MCF 10A (cell line): ENCODE measurements at regions of chr12 and their contacts with region 1.

Region 1: DNA sequence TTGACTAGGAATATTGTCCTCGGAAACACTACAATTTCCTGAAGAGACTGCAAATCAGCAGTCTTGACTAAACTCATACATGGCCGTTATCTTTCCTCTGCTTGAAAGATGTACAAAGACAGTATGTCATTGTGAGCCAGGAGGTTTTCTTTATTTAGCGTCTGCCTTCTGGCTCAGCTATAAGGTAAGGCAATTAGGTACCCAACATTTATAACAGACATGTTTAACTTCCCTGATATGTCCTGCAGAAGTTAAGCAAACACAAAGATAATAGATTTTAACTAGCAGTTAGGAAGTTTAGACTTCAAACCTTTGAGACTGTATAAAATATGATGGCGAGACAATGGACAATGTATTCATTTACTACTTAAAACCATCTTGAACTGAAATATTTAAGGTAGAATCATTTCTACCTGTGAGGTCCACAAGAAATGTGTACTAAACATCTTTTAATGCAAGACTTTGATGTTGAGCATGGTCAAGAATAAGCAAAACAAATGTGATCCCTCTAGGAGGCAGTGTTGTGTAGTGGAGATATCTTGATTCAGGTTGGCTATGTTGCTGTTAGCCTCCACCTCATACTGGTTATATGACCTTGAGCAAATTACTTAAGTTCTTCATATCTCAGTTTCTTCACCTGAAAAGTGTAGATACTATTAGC is 96.2 kb upstream of the EEA1 start:
- DNase-seq: peak; percentile 70
- H3K4me3 Mint-ChIP-seq: no peak overlapping the region
- H3K27ac Mint-ChIP-seq: no peak overlapping the region
- H3K4me1 Mint-ChIP-seq: no peaks in the 10 kb centered on the region
- H3K27me3 Mint-ChIP-seq: no peaks in the 10 kb centered on the region
- CTCF ChIP-seq: peak; percentile 51

Region 2: DNA sequence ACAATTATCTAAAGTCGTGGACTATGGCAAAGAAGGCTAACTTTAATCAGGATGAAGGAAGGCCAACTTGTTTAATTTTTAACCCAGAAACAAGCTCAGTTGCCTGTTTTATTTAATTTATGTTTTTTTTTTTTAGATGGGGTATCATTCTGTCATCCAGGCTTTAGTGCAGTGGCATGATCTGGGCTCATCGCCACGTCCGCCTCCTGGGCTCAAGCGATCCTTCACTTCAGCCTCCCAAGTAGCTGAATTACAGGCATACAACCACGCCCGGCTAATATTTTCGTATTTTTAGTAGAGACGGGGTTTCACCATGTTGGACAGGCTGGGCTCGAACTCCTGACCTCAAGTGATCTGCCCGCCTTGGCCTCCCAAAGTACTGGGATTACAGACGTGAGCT is 372.1 kb after region 1 on chr12:
- CTCF ChIA-PET with region 1: interaction called, 5 read pairs
- POLR2A ChIA-PET with region 1: no interaction called
- intact Hi-C with region 1: loop called (anchors 2 kb)
- DNase-seq: no peak
- H3K4me3 Mint-ChIP-seq: no peak overlapping the region
- H3K27ac Mint-ChIP-seq: no peak overlapping the region
- H3K4me1 Mint-ChIP-seq: no peaks in the 10 kb centered on the region
- H3K27me3 Mint-ChIP-seq: no peaks in the 10 kb centered on the region
- CTCF ChIP-seq: no peak